Pancreas (tissue), 10 donors: ENCODE measurements at regions of chr19 and their contacts with region 1.

Region 1: GRCh38 chr19:17932485-17933338 is at the start of gene CCDC124:
- DNase-seq: peak; percentile 89 to 96 (median 94)
- ATAC-seq: peak; percentile 98 to 99 (median 98)
- H3K4me3 ChIP-seq: peak within 1 kb of the TSS; percentile 78 to 95 (median 87)
- H3K27ac ChIP-seq: peak within 1 kb of the TSS; percentile 66 to 89 (median 78)
- H3K4me1 ChIP-seq: peaks cover 0 to 10% (median 7%) of the 10 kb centered on the region in 3 donors
- H3K27me3 ChIP-seq: no peaks in the 10 kb centered on the region
- CTCF ChIP-seq: peak; percentile 55 to 82 (median 74)
- total RNA-seq, gene CCDC124: 15.0 to 35.5 (median 28.9) TPM

Region 2: DNA sequence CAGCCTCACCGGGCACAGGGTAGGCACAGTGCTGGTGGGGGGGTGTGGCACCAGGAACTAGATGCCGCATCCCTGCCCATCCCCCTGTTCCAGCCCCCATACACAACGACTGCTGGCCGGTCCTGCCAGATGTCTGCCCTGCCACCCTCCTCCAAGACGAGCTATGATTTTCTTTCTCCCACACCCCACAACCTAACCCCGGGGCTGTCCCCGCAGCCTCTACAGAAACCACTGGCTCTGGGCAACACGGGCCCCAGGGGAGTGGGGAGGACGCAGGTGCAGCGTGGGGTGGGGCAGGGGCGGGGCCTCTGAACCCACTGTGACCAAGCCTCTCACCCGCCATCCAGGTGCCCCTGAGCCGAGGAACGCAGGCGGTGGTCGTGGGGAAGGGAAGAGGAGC is 405.8 kb before region 1 on chr19:
- intact Hi-C with region 1: no loop called
- DNase-seq: no peak
- ATAC-seq: no peak
- H3K4me3 ChIP-seq: no peak overlapping the region
- H3K27ac ChIP-seq: no peak overlapping the region
- H3K4me1 ChIP-seq: no peaks in the 10 kb centered on the region
- H3K27me3 ChIP-seq: no peaks in the 10 kb centered on the region
- CTCF ChIP-seq: no peak

Region 3: GRCh38 chr19:17865364-17866311 is 67.1 kb before region 1 on chr19:
- intact Hi-C with region 1: loop called (anchors 5 to 10 kb)
- DNase-seq: no peak
- ATAC-seq: peak in 3 of 4 donors; percentile 40 to 52 (median 44)
- H3K4me3 ChIP-seq: no peak overlapping the region
- H3K27ac ChIP-seq: no peak overlapping the region
- H3K4me1 ChIP-seq: peaks cover 0 to 9% (median 0%) of the 10 kb centered on the region in 3 donors
- H3K27me3 ChIP-seq: peaks cover 0 to 3% (median 0%) of the 10 kb centered on the region in 4 donors
- CTCF ChIP-seq: no peak

Region 4: GRCh38 chr19:17873786-17874757 is 58.6 kb before region 1 on chr19:
- intact Hi-C with region 1: loop called (anchors 5 to 10 kb)
- DNase-seq: peak in 2 of 6 donors; percentile 49 to 77
- ATAC-seq: peak; percentile 55 to 82 (median 58)
- H3K4me3 ChIP-seq: peak overlapping the region in 1 of 4 donors; percentile 36
- H3K27ac ChIP-seq: no peak overlapping the region
- H3K4me1 ChIP-seq: peaks cover 0 to 5% (median 0%) of the 10 kb centered on the region in 3 donors
- H3K27me3 ChIP-seq: peaks cover 0 to 27% (median 4%) of the 10 kb centered on the region in 4 donors
- CTCF ChIP-seq: no peak

Region 5: DNA sequence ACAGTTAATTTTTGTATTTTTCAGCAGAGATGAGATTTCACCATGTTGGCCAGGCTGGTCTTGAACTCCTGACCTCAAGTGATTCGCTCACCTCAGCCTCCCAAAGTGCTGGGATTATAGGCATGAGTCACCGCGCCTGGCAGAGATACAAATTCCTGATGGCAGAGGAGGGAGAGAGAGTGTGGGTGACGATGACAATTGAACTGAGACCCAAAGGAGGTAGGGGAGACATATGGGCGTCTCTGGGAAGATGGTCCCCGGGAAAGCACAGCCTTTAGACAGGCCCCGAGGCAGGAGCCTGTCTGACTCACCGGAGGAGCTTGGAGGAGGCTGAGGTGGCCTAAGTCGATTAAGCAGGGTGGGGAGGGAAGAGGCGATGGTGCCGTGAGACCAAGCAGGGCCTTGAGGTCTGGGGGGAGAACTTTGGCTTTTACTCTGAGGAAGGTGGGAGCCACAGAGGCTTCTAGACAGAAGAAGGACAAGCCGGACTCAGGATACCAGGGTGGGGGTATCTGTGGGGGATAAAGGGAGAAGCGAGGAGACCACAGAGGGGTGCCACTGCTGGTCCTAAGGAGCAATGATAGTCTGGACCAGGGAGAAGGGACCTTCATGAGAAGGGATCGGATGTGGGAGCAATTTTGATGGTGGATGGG is 113.5 kb after region 1 on chr19:
- intact Hi-C with region 1: no loop called
- DNase-seq: no peak
- ATAC-seq: no peak
- H3K4me3 ChIP-seq: no peak overlapping the region
- H3K27ac ChIP-seq: peak overlapping the region in 2 of 4 donors; percentile 85 to 90
- H3K4me1 ChIP-seq: peaks cover 0 to 20% (median 4%) of the 10 kb centered on the region in 3 donors
- H3K27me3 ChIP-seq: no peaks in the 10 kb centered on the region
- CTCF ChIP-seq: no peak